ENCODE measurements at regions of chr7 and their contacts with region 1.

Region 1: DNA sequence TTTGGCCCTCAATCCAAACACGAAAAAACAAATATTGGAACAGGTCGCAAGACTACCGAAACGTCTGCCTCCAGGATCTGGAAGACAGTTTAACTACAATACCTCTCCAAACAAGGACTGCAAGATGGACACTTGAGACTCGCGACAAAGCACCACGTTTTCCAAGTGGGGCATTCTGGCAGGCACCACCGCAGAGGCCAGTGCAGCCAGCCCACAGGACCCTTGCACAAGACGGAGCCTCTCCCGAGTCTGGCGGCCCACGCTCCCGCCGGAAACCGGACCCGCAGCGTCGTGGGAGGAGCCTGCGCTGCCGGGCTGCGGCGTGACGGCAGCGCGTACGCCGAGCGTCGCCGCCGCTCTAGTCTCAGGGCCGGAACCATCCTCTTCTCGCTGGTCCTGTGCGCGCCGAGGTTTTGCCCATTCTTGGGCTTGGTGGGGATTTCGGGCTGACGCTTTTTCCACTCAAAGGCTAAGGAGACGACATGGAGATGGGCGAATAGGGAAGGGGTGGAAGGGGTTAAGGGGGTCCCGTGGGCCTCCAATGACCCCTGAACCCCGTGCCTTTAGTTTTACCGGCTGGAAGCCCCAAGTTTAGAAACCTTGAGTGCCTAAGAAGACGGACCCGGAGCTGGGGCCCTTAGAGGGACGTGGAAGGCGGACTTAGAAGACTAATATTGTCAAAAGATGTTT is at the start of gene ORC5:
- DNase-seq: peak; percentile 85
- H3K4me3 ChIP-seq: peak within 1 kb of the TSS; percentile 75 to 98 (median 93)
- H3K27ac ChIP-seq: peak within 1 kb of the TSS; percentile 70
- H3K4me1 ChIP-seq: peaks cover 16% of the 10 kb centered on the region
- H3K27me3 ChIP-seq: no peaks in the 10 kb centered on the region
- CTCF ChIP-seq: no peak
- POLR2A ChIP-seq: peak; percentile 95
- total RNA-seq, gene ORC5: 18.6 and 21.1 TPM in 2 replicates

Region 2: GRCh38 chr7:104225451-104225850 is 17.6 kb after region 1 on chr7:
- CTCF ChIA-PET with region 1: interaction called, 5 read pairs
- POLR2A ChIA-PET with region 1: interaction called, 4 read pairs
- dilution Hi-C with region 1: no loop called
- intact Hi-C with region 1: loop called (anchors 2 kb)
- DNase-seq: no peak
- H3K4me3 ChIP-seq: no peak overlapping the region
- H3K27ac ChIP-seq: no peak overlapping the region
- H3K4me1 ChIP-seq: peaks cover 8% of the 10 kb centered on the region
- H3K27me3 ChIP-seq: peaks cover 0 to 5% of the 10 kb centered on the region in 2 experiments
- CTCF ChIP-seq: no peak
- POLR2A ChIP-seq: no peak

Region 3: DNA sequence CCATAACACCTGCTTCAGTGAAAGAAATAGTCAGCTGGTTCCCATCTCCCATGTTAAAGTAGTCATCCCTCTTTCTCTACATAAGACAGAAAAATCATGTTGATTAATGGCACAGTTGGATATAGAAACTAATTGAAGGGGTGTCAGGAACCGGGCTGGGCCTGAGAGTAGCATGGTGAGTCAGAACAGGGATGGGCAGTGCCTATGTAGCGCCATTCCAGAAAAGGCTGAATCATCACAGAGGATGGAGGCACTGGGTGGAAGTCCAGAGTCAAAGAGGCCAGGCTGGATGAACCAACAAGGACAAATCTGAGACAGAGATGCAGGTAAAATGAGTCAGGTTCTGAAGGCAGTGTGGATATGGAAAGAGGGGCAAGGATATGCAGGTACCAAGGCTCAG is 321.7 kb after region 1 on chr7:
- CTCF ChIA-PET with region 1: no interaction called
- POLR2A ChIA-PET with region 1: no interaction called
- dilution Hi-C with region 1: no loop called
- intact Hi-C with region 1: no loop called
- DNase-seq: no peak
- H3K4me3 ChIP-seq: no peak overlapping the region
- H3K27ac ChIP-seq: no peak overlapping the region
- H3K4me1 ChIP-seq: no peaks in the 10 kb centered on the region
- H3K27me3 ChIP-seq: no peaks in the 10 kb centered on the region
- CTCF ChIP-seq: no peak
- POLR2A ChIP-seq: no peak